GM18951 (cell line): ENCODE measurements at regions of chr6 and their contacts with region 1.

Region 1: DNA sequence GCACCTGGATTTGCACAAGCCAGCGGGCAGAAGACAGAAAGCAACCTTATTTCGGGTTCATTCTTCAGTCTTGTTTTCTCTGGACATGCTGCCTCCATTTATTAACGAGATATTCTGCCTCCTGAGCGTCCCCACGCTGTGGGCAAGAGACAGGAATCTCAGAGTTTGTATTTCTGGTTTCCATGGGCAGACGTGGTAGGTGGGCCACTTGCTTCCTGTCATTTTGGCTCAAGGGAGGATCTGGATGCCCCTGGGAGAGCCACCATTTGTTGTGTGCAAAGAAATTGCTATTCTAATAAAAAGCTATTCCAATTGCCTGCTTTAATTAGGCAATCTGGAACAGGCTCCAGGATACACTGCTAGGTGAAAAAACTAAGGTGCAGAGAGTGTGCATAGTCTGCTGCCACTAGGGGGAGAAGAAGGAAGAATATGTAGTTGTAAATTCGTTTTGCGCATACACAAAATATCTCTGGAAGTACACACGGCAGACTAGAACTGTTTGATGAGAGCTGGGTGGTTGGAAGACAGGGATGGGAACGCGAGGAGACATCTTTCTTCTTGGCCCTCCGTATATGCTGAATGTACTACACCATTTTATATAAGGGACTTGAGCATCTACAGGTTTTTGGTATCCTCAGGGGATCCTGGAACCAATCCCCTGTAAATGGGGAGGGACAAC is 30.1 kb upstream of the SLC16A10 start:
- POLR2A ChIP-seq: no peak

Region 2: GRCh38 chr6:111207141-111207850 is 150.1 kb after region 1 on chr6:
- in situ Hi-C with region 1: loop called (anchors 10 kb)
- POLR2A ChIP-seq: no peak